ENCODE measurements at regions of chr9 and their contacts with region 1.

Region 1: DNA sequence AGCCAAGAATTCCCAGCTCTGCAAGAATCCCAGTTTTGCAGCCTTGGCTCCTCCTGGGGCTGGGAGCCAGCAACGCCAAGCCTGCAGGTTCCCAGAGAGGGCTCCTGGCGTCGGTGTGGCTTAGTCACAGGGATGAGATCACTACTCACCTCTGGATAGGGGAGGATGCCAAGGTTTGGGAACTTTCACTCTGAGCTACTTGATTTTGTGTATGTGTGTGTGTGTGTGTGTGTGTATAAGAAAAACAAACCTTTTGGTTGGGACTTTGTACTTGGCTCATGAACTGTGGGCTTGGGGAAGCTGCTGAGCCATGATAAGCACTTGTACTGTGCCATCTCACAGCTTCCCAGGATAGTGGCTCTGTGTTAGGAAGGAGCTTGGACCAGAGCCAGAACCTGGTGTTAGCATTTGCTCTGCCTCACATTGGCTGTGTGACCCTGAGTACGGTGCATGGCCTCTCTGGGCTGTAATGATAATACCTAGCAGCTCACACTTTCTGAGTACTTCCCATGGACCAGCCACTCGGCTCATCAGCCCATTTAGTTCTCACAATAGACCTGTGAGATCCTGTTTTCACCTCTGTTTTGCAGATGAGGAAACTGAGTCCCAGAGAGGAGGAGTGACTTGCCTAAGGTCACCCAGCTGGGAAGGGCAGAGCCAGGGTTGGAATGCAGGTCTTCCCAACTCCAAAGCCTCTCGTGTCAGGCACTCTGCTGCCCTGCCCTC is 41.4 kb upstream of the DAB2IP start:
- DNase-seq: peak; percentile 29
- H3K4me3 ChIP-seq: no peak overlapping the region
- H3K27ac ChIP-seq: no peak overlapping the region
- H3K4me1 ChIP-seq: peaks cover 8% of the 10 kb centered on the region
- H3K27me3 ChIP-seq: peaks cover 0 to 9% of the 10 kb centered on the region in 2 experiments
- CTCF ChIP-seq: no peak
- POLR2A ChIP-seq: no peak

Region 2: DNA sequence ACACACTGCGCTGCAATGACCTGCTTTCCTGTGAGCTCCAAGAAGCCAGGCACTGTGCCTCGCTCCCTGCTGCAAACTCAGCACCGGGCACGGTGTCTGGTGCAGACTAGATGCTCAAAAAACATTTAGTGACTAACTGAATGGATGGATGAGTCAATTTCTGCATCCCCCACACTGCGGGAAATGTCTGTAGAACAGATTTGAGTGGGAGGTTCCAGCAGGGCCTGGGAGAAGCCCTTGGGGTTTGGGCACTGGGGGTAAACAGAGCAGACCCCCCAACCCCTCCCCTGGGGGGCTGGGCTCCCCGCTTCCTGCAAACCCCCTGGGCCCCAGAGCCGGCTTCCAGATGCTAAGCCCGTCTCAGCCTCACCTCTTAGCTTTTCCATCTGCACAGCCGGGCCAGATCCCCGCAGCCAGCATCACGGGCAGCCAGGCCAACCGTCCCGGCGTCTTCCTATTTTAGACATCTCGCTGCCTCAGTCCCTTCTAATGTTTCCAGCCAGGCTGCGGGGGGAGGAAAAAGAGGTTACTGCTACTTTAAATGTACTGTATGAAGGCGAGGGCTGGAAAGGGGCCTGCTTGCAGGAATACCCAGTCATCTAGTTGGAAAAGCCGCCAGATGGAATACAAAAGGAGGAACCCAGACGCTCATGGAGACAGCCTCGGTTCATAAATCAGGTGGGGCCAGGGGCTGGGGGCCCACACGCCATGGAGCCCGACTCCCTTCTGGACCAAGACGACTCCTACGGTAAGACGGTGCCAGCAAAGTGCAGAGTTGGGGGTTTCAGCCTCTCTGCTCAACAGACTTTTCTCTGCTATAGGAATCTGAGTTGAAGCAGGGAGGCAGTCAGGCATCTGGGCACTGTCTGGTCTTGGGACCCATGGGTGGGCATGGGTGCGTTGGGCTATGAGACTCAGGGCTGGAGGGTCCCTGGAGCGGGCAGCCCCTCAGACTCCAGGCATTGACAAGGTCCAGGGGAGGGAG is 43.2 kb before region 1 on chr9:
- CTCF ChIA-PET with region 1: interaction called, 3 read pairs
- POLR2A ChIA-PET with region 1: interaction called, 3 read pairs
- dilution Hi-C with region 1: no loop called
- intact Hi-C with region 1: loop called (anchors 5 kb)
- DNase-seq: peak; percentile 39
- H3K4me3 ChIP-seq: peak overlapping the region in 1 of 3 experiments; percentile 1
- H3K27ac ChIP-seq: no peak overlapping the region
- H3K4me1 ChIP-seq: peaks cover 32% of the 10 kb centered on the region
- H3K27me3 ChIP-seq: no peaks in the 10 kb centered on the region
- CTCF ChIP-seq: no peak
- POLR2A ChIP-seq: no peak

Region 3: GRCh38 chr9:121621113-121621449 is 11.1 kb after region 1 on chr9:
- CTCF ChIA-PET with region 1: interaction called, 14 read pairs
- POLR2A ChIA-PET with region 1: no interaction called
- dilution Hi-C with region 1: no loop called
- intact Hi-C with region 1: no loop called
- DNase-seq: peak; percentile 35
- H3K4me3 ChIP-seq: no peak overlapping the region
- H3K27ac ChIP-seq: no peak overlapping the region
- H3K4me1 ChIP-seq: no peaks in the 10 kb centered on the region
- H3K27me3 ChIP-seq: no peaks in the 10 kb centered on the region
- CTCF ChIP-seq: peak; percentile 38 to 61
- POLR2A ChIP-seq: no peak